Calu3 (cell line): ENCODE measurements at regions of chr9 and their contacts with region 1.

Region 1: GRCh38 chr9:12329623-12329985 is 363.6 kb upstream of the TYRP1 start:
- DNase-seq: no peak
- H3K4me3 Mint-ChIP-seq: no peak overlapping the region
- H3K27ac Mint-ChIP-seq: no peak overlapping the region
- H3K4me1 Mint-ChIP-seq: no peaks in the 10 kb centered on the region
- H3K27me3 Mint-ChIP-seq: no peaks in the 10 kb centered on the region
- CTCF ChIP-seq: no peak

Region 2: DNA sequence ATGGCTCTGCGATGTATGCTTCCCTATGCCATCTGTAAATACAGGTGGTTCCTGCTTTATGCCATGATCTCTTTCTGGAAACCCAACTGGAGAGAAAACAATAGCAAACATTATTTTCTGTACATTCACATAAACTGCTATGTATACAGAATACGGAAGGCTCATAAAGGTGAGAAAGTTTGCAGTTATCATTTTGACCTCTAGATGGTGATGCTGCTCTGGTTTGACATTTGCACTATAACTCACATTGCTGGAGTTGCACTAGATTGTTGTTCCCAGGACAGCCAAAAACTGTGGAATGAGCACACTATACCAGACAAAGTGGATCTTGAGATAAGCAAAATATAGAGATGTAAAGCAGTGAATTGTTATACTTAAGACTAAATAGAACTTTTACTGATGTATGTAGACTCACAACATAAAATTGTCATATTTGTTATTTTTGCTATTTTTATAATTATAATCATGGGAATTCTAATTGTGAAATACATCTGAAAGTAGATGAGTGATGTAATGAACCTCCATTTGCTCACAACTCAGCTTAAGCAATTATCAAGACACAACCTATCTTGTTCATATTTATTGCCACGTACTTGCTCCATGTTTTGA is 1963.3 kb before region 1 on chr9:
- CTCF ChIA-PET with region 1: no interaction called
- intact Hi-C with region 1: loop called (anchors 2 kb)
- DNase-seq: peak; percentile 10
- H3K4me3 Mint-ChIP-seq: no peak overlapping the region
- H3K27ac Mint-ChIP-seq: no peak overlapping the region
- H3K4me1 Mint-ChIP-seq: no peaks in the 10 kb centered on the region
- H3K27me3 Mint-ChIP-seq: no peaks in the 10 kb centered on the region
- CTCF ChIP-seq: no peak

Region 3: GRCh38 chr9:11577522-11577921 is 752.1 kb before region 1 on chr9:
- CTCF ChIA-PET with region 1: no interaction called
- intact Hi-C with region 1: no loop called
- DNase-seq: no peak
- H3K4me3 Mint-ChIP-seq: no peak overlapping the region
- H3K27ac Mint-ChIP-seq: no peak overlapping the region
- H3K4me1 Mint-ChIP-seq: no peaks in the 10 kb centered on the region
- H3K27me3 Mint-ChIP-seq: no peaks in the 10 kb centered on the region
- CTCF ChIP-seq: no peak